Activated CD8-positive, alpha-beta memory T cell treated with anti-CD3 and anti-CD28 coated beads, Interleukin-2, amount 10 ng/mL, durations not matched to agents 7 days and 5 days (primary cell): ENCODE measurements at regions of chr22 and their contacts with region 1.

Region 1: DNA sequence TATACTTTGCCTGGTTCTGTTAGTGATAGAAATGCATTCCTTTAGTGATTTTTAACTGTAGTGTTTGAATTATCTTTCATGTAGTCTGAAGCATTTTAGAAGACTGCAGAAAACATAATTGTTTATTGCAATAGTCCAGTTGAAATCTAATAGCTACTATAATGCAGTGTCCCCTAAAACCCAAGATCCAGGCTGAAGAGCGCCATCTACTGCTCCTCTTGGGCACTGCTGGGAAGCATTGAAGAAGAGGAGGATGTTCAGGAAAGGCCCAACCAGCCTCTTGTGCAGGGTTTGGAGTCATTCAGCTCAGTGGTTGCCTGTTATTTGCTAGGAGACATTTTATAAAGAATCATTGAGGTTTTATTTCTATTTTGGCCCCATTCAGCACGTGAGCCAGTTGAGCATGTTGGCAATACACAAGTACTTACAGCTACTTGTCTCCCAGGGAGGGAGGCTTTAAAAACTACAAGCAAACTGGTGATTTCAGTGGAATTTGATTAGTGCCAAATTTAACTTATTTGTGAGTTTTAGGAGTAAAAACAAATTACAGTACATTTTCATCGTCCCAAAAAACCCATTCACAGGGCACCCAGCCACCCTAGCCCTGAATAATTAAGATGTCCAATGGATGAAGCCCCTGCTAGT is 74.9 kb upstream of the HORMAD2 start:
- DNase-seq: peak; percentile 70
- ATAC-seq: peak; percentile 61
- H3K4me3 Mint-ChIP-seq: no peak overlapping the region
- H3K27ac Mint-ChIP-seq: no peak overlapping the region
- H3K4me1 Mint-ChIP-seq: peaks cover 2% of the 10 kb centered on the region
- H3K27me3 Mint-ChIP-seq: no peaks in the 10 kb centered on the region

Region 2: GRCh38 chr22:29635734-29636357 is 369.5 kb before region 1 on chr22:
- CTCF ChIA-PET with region 1: interaction called, 15 read pairs
- DNase-seq: no peak
- ATAC-seq: peak; percentile 45
- H3K4me3 Mint-ChIP-seq: no peak overlapping the region
- H3K27ac Mint-ChIP-seq: no peak overlapping the region
- H3K4me1 Mint-ChIP-seq: peaks cover 26% of the 10 kb centered on the region
- H3K27me3 Mint-ChIP-seq: no peaks in the 10 kb centered on the region

Region 3: DNA sequence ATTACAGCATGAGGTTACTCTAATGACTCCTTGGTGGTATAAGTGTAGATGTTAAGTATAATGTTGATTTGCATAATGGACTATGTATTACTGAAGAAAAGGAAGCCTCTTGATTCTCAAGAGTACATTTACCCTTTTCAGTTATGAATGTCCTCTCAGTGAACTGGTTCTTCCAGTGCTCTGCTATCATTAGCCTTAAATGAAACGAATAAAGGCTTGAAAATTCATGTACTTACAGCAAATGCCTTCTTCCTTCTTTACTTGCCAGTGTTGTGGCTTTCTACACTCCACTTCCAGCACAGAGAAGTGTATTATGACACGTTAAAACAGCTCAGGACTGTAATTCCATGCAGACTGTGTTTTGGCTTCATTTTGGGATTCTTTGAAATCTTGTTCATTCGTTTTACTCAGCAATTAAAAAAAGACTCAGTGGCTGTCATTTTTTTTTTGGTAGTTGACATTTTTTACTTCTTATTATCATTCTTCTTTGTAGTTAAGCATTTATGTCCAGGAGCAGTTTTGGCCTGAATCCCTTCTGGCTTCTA is 25.5 kb before region 1 on chr22:
- CTCF ChIA-PET with region 1: interaction called, 13 read pairs
- DNase-seq: no peak
- ATAC-seq: no peak
- H3K4me3 Mint-ChIP-seq: no peak overlapping the region
- H3K27ac Mint-ChIP-seq: no peak overlapping the region
- H3K4me1 Mint-ChIP-seq: no peaks in the 10 kb centered on the region
- H3K27me3 Mint-ChIP-seq: no peaks in the 10 kb centered on the region

Region 4: DNA sequence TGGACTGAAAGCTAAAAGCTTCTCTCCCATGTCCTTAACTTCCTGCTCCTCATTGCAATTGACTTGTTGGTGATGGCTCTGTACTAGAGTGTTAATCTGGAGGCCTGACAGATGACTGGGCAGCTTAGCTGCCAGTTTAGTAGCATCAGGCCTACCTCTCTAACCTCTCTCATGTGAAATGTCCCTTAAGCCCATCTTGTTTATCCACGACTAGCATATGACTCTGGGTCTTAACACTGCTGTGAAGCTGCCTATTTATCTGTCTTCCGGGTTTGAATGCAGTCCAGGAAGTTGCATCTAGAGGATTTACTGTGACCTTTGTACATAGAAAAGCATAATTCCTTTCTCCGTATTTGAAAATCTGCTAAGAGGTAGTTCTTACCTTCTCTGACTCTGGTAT is 10.4 kb before region 1 on chr22:
- CTCF ChIA-PET with region 1: interaction called, 19 read pairs
- DNase-seq: no peak
- ATAC-seq: peak; percentile 27
- H3K4me3 Mint-ChIP-seq: no peak overlapping the region
- H3K27ac Mint-ChIP-seq: no peak overlapping the region
- H3K4me1 Mint-ChIP-seq: peaks cover 10% of the 10 kb centered on the region
- H3K27me3 Mint-ChIP-seq: no peaks in the 10 kb centered on the region

Region 5: GRCh38 chr22:30015846-30016245 is 10.5 kb after region 1 on chr22:
- CTCF ChIA-PET with region 1: interaction called, 13 read pairs
- DNase-seq: no peak
- ATAC-seq: no peak
- H3K4me3 Mint-ChIP-seq: no peak overlapping the region
- H3K27ac Mint-ChIP-seq: no peak overlapping the region
- H3K4me1 Mint-ChIP-seq: no peaks in the 10 kb centered on the region
- H3K27me3 Mint-ChIP-seq: no peaks in the 10 kb centered on the region